ENCODE measurements at regions of chr12 and their contacts with region 1.

Region 1: DNA sequence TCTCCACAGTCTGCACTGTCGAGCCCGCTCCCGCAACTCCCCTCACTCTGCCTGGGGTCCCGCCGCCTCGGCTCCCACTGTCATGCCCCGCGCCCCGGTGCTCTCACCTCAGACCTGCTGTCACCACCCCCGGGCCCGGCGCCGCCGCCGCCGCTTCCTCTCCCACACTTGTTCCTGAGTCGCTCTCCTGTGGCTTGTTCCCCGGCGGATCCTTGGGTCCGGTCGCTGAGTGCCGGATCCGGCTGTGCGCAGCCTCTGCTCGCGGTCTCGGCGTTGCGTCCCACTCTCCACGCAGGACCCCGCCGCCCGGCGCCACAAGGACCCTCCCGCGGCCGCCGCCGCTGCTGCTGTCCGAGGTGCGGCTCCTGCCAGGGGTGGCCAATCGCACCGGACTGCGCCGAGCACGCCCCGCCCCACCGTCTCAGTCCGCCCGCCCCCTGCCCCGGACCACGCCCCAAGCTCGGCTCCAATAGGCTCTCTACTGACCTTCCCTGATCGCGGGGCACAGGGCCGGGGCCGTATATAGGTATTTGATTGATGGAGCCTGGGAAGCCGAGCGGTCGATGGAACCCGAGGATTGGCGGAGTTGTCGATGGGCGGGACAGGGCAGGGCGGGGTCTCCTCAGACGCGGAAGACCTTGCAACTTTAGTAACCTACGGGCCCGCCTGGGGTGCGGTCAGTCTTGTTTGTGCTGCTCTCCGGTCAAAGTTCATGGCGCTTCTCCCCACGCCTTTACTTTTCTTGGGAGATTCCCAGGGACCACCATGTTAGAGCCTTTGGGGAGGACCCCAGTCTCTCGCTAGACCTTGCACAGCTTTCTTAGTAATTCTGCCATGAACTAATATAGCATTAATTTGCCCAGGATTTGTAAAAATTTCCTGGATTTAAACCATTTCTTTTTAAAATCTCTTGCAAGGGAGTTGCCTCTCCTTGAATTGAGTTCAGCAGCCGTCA is at the start of gene TAOK3:
- DNase-seq: peak; percentile 90 to 98 (median 96)
- ATAC-seq: peak; percentile 95
- H3K4me3 ChIP-seq: peak within 1 kb of the TSS; percentile 93
- H3K4me3 Mint-ChIP-seq: peak within 1 kb of the TSS; percentile 90 to 99 (median 93)
- H3K27ac ChIP-seq: peak within 1 kb of the TSS; percentile 78
- H3K27ac Mint-ChIP-seq: peak within 1 kb of the TSS; percentile 86 to 99 (median 93)
- H3K4me1 ChIP-seq: peaks cover 26 to 27% of the 10 kb centered on the region in 2 donors
- H3K4me1 Mint-ChIP-seq: peaks cover 34 to 63% (median 51%) of the 10 kb centered on the region in 7 donors
- H3K27me3 ChIP-seq: no peaks in the 10 kb centered on the region
- H3K27me3 Mint-ChIP-seq: peaks cover 0 to 16% (median 0%) of the 10 kb centered on the region in 5 donors
- total RNA-seq, gene TAOK3: 55.2 to 102 (median 67.3) TPM

Region 2: DNA sequence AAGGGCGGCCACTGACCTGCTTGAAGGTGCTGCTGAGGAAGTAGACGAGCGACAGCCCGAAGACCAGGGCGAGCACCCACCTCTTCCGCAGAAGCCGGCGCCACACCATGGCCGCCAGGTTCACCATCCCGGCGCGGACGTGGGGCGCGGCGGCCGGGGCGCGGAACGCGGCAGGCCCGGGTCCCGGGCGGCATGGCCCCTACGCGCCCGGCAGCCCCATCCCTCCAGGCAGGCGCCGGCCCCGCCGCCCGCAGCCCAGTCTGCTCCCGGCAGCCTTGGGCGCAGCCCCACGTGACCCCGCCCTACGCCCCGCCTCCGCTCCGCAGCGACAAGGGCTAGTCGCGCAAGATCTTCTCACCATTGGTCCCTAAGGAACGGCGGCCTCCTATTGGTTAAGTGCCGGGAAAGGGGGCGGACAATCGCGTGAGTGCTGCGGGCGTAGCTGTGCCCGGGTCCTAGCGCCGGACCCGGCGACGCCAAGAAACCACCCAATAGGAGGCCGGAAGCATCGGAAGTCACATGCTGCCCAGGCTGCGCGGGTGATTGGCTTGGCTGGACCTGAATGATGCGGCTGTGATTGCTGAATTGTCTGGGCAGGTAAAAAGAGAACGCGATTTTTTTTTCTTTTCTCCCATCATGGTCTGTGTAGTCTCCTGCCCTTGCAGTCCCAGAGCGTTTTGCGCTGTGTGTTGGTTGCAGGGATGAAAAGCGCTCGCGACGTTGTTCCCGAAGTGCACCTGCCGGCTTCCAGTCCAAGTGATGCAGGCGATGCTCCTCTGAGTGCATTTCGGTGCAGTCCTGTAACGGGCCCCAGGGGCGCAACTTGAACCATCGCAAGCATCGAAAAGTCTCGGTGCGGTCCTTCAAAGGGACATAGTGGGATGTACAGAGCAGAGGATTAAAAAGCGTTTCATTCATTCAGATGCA is 1634.8 kb before region 1 on chr12 and contains the starts of genes RNFT2 and SPRING1:
- CTCF ChIA-PET with region 1: no interaction called
- POLR2A ChIA-PET with region 1: no interaction called
- intact Hi-C with region 1: loop called in 1 of 2 experiments (anchors 2 kb)
- DNase-seq: peak; percentile 94 to 99 (median 99)
- ATAC-seq: peak; percentile 99
- H3K4me3 ChIP-seq: peak within 1 kb of the TSS; percentile 82
- H3K4me3 Mint-ChIP-seq: peak within 1 kb of the TSS; percentile 94 to 100 (median 96)
- H3K27ac ChIP-seq: peak within 1 kb of the TSS; percentile 75
- H3K27ac Mint-ChIP-seq: peak within 1 kb of the TSS; percentile 75 to 92 (median 88)
- H3K4me1 ChIP-seq: peaks cover 4 to 12% of the 10 kb centered on the region in 2 donors
- H3K4me1 Mint-ChIP-seq: peaks cover 18 to 43% (median 36%) of the 10 kb centered on the region in 7 donors
- H3K27me3 ChIP-seq: no peaks in the 10 kb centered on the region
- H3K27me3 Mint-ChIP-seq: no peaks in the 10 kb centered on the region
- total RNA-seq, gene RNFT2: 5.4 to 8.3 (median 7.4) TPM
- total RNA-seq, gene SPRING1: 12.1 to 29.5 (median 25.4) TPM

Region 3: GRCh38 chr12:117874842-117875434 is 497.9 kb before region 1 on chr12:
- CTCF ChIA-PET with region 1: no interaction called
- POLR2A ChIA-PET with region 1: no interaction called
- intact Hi-C with region 1: loop called (anchors 1 to 10 kb)
- DNase-seq: peak; percentile 10 to 70 (median 39)
- ATAC-seq: peak; percentile 69
- H3K4me3 ChIP-seq: no peak overlapping the region
- H3K4me3 Mint-ChIP-seq: peak overlapping the region in 1 of 10 donors; percentile 30
- H3K27ac ChIP-seq: no peak overlapping the region
- H3K27ac Mint-ChIP-seq: peak overlapping the region in 1 of 9 donors; percentile 34
- H3K4me1 ChIP-seq: peaks cover 0 to 4% of the 10 kb centered on the region in 2 donors
- H3K4me1 Mint-ChIP-seq: peaks cover 0 to 6% (median 4%) of the 10 kb centered on the region in 7 donors
- H3K27me3 ChIP-seq: peaks cover 0 to 3% of the 10 kb centered on the region in 2 donors
- H3K27me3 Mint-ChIP-seq: peaks cover 20 to 34% (median 26%) of the 10 kb centered on the region in 5 donors

Region 4: DNA sequence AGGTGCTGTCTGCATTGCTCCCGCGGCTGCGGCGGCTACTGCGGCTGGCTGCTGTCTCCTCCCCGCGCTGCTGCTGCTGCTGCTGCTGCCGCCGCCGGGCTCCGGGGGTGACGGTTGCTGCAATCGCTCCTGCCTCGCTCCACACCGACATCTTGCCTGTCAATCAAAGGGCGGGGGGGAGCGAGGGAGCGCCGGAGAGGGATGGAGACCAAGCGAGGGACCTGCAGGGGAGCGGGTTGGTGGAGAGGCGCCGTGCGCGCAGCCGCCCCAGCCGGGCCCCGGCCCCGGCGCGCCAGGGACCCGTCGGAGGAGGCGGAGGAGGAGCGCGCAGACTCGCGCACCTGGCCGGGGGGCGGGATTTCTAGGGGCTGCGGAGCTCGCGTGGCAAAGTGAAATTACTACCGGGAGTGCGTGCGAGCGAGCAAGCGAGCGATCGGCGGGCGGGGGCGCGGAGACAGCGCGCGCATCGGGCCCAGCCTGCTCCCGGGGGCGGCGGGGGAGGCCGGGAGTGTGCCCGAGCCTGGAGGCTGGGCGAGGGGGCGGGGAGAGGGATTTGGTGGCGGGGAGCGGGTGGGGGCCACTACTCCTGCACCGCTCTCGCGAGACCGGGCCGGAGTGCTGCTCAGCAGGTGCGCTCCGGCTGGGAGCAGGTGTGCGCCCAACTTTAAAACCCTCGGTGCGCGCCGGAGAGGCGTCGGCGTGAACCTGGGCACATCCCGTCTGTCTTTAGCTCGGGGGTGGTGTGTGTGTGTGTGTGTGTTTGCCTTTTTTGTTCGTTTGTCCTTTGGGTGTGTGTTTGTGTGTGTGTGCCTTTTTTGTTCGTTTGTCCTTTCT is 403.8 kb before region 1 on chr12 and contains the start of gene KSR2:
- CTCF ChIA-PET with region 1: no interaction called
- POLR2A ChIA-PET with region 1: no interaction called
- intact Hi-C with region 1: no loop called
- DNase-seq: peak in 8 of 9 donors; percentile 5 to 59 (median 16)
- ATAC-seq: peak; percentile 68
- H3K4me3 ChIP-seq: no peak within 1 kb of the TSS
- H3K4me3 Mint-ChIP-seq: peak within 1 kb of the TSS; percentile 72 to 90 (median 82)
- H3K27ac ChIP-seq: no peak within 1 kb of the TSS
- H3K27ac Mint-ChIP-seq: peak within 1 kb of the TSS in 1 of 9 donors; percentile 31
- H3K4me1 ChIP-seq: no peaks in the 10 kb centered on the region
- H3K4me1 Mint-ChIP-seq: peaks cover 0 to 21% (median 10%) of the 10 kb centered on the region in 7 donors
- H3K27me3 ChIP-seq: no peaks in the 10 kb centered on the region
- H3K27me3 Mint-ChIP-seq: peaks cover 57 to 75% (median 65%) of the 10 kb centered on the region in 5 donors
- total RNA-seq, gene KSR2: 0.03 to 0.07 TPM in 2 of 5 experiments, not detected in the others

Region 5: DNA sequence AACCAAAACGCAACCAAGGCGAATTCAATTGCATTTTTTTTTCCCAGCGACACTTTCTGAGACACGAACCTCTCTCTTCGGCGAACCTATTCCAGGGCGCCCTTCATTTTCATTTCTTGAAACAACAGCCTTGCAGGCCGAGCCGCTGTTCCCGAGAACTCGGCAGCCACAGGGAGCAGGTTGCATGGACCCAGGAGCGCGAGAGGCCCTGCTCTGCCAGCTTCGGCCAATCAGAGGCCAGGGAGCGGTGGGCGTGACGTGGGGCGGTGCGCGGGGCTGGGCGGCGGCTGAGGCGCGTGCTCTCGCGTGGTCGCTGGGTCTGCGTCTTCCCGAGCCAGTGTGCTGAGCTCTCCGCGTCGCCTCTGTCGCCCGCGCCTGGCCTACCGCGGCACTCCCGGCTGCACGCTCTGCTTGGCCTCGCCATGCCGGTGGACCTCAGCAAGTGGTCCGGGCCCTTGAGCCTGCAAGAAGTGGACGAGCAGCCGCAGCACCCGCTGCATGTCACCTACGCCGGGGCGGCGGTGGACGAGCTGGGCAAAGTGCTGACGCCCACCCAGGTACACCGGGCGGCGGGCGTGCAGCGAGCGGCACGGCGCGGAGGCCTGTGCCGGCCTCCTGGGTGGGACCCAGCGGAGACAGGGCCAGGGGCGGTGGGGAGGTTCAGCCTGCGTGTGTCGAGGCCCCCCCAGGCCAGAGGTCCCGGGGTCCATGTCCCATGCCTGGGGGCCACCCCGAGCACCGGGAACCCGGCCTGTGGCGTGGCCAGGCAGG is 236.8 kb before region 1 on chr12 and contains the start of gene PEBP1:
- CTCF ChIA-PET with region 1: interaction called, 8 read pairs
- POLR2A ChIA-PET with region 1: interaction called, 27 read pairs
- intact Hi-C with region 1: loop called (anchors 1 kb)
- DNase-seq: peak; percentile 85 to 94 (median 89)
- ATAC-seq: peak; percentile 100
- H3K4me3 ChIP-seq: peak within 1 kb of the TSS; percentile 76
- H3K4me3 Mint-ChIP-seq: peak within 1 kb of the TSS; percentile 86 to 99 (median 97)
- H3K27ac ChIP-seq: peak within 1 kb of the TSS; percentile 83
- H3K27ac Mint-ChIP-seq: peak within 1 kb of the TSS; percentile 84 to 96 (median 91)
- H3K4me1 ChIP-seq: peaks cover 6 to 17% of the 10 kb centered on the region in 2 donors
- H3K4me1 Mint-ChIP-seq: peaks cover 7 to 46% (median 37%) of the 10 kb centered on the region in 7 donors
- H3K27me3 ChIP-seq: no peaks in the 10 kb centered on the region
- H3K27me3 Mint-ChIP-seq: no peaks in the 10 kb centered on the region
- total RNA-seq, gene PEBP1: 73.8 to 109 (median 91.1) TPM

Region 6: GRCh38 chr12:118312578-118312977 is 60.2 kb before region 1 on chr12:
- CTCF ChIA-PET with region 1: interaction called, 11 read pairs
- POLR2A ChIA-PET with region 1: no interaction called
- intact Hi-C with region 1: loop called in 1 of 2 experiments (anchors 5 kb)
- DNase-seq: no peak
- ATAC-seq: no peak
- H3K4me3 ChIP-seq: no peak overlapping the region
- H3K4me3 Mint-ChIP-seq: peak overlapping the region in 1 of 10 donors; percentile 5
- H3K27ac ChIP-seq: no peak overlapping the region
- H3K27ac Mint-ChIP-seq: peak overlapping the region in 4 of 9 donors; percentile 0 to 78 (median 42)
- H3K4me1 ChIP-seq: peaks cover 0 to 5% of the 10 kb centered on the region in 2 donors
- H3K4me1 Mint-ChIP-seq: peaks cover 27 to 61% (median 53%) of the 10 kb centered on the region in 7 donors
- H3K27me3 ChIP-seq: no peaks in the 10 kb centered on the region
- H3K27me3 Mint-ChIP-seq: no peaks in the 10 kb centered on the region

Region 7: GRCh38 chr12:118480235-118480634 is 107.4 kb after region 1 on chr12:
- CTCF ChIA-PET with region 1: no interaction called
- POLR2A ChIA-PET with region 1: no interaction called
- intact Hi-C with region 1: no loop called
- DNase-seq: no peak
- ATAC-seq: no peak
- H3K4me3 ChIP-seq: no peak overlapping the region
- H3K4me3 Mint-ChIP-seq: no peak overlapping the region
- H3K27ac ChIP-seq: no peak overlapping the region
- H3K27ac Mint-ChIP-seq: no peak overlapping the region
- H3K4me1 ChIP-seq: no peaks in the 10 kb centered on the region
- H3K4me1 Mint-ChIP-seq: no peaks in the 10 kb centered on the region
- H3K27me3 ChIP-seq: no peaks in the 10 kb centered on the region
- H3K27me3 Mint-ChIP-seq: peaks cover 0 to 8% (median 3%) of the 10 kb centered on the region in 5 donors

Region 8: DNA sequence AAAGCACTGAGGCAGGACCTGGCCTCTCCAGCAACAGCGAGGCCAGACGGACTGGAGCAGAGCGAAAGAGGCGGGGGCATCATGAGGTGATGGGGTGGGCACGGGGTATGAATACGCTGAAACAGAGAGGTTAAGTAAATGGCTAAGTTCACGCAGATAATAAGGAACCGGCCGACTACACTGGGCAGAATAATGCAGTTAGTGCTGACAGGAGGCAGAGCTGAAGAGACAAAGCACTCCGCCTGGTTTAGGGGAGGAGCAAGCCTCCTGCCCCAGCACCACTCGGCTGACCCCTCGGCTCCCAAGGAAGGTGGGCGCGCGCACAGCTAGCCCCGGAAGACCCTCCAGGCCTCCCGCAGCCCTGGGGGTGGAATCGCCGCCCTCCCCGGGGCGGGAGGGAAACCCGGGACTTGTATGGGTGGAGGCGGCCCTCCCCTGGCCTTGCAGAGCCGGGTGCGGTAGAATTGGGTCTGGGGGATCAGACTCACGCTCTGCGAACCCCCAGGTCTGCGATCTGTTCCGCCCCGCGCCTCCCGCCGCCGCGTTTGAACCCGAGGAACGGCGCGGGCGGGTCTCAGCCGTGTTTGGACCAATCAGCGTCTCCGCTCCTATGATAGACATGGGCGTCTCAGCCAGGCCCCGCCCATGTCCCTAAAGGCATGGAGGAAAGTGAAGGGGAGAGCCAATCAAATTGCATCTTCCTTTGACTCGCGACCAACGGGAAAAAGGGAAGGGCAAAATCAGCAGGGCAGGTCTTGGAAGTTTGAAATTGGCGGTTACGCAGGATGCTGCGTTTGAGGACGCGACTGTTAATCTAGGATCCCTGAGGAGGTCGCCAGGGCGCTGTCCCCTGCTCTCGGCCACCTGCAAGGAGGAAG is 1504.2 kb after region 1 on chr12 and contains the start of gene CIT:
- CTCF ChIA-PET with region 1: no interaction called
- POLR2A ChIA-PET with region 1: no interaction called
- intact Hi-C with region 1: loop called in 1 of 2 experiments (anchors 2 kb)
- DNase-seq: peak; percentile 71 to 86 (median 81)
- ATAC-seq: peak; percentile 100
- H3K4me3 ChIP-seq: peak within 1 kb of the TSS; percentile 86
- H3K4me3 Mint-ChIP-seq: peak within 1 kb of the TSS; percentile 78 to 97 (median 88)
- H3K27ac ChIP-seq: peak within 1 kb of the TSS; percentile 58
- H3K27ac Mint-ChIP-seq: peak within 1 kb of the TSS in 8 of 9 donors; percentile 5 to 83 (median 37)
- H3K4me1 ChIP-seq: no peaks in the 10 kb centered on the region
- H3K4me1 Mint-ChIP-seq: peaks cover 10 to 27% (median 15%) of the 10 kb centered on the region in 7 donors
- H3K27me3 ChIP-seq: no peaks in the 10 kb centered on the region
- H3K27me3 Mint-ChIP-seq: peaks cover 0 to 14% (median under 1%) of the 10 kb centered on the region in 5 donors
- total RNA-seq, gene CIT: 1.6 to 69.9 (median 3.6) TPM